Activated CD8-positive, alpha-beta T cell treated with anti-CD3 and anti-CD28 coated beads, Interleukin-2, amount 10 ng/mL, durations not matched to agents 7 days and 5 days (primary cell): ENCODE measurements at regions of chr10 and their contacts with region 1.

Region 1: GRCh38 chr10:95246579-95247051 is 44.2 kb downstream of the PDLIM1 start:
- DNase-seq: peak; percentile 81
- ATAC-seq: peak; percentile 84
- H3K4me3 Mint-ChIP-seq: no peak overlapping the region
- H3K27ac Mint-ChIP-seq: no peak overlapping the region
- H3K4me1 Mint-ChIP-seq: peaks cover 17% of the 10 kb centered on the region
- H3K27me3 Mint-ChIP-seq: no peaks in the 10 kb centered on the region

Region 2: DNA sequence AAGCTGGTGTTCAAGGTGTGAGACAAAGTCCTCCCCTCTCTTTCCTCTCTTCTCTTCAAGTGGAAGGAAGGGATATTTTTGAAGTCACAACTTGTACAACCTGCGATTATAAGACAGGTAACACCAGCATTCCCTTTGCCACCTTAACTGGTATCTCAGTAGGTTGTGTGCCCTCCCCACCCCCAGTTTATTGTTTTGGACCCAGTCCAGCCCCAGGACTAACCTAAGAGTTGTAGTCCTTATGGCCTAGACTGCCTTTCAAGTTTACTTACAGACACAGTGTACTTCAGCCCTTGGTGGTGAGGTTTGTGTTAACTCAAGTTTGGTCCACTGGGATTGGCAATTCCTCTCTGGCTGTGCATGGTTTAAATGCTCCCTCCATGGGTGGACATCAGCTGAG is 150.5 kb before region 1 on chr10:
- CTCF ChIA-PET with region 1: no interaction called
- POLR2A ChIA-PET with region 1: no interaction called
- DNase-seq: no peak
- ATAC-seq: no peak
- H3K4me3 Mint-ChIP-seq: no peak overlapping the region
- H3K27ac Mint-ChIP-seq: no peak overlapping the region
- H3K4me1 Mint-ChIP-seq: no peaks in the 10 kb centered on the region
- H3K27me3 Mint-ChIP-seq: no peaks in the 10 kb centered on the region

Region 3: DNA sequence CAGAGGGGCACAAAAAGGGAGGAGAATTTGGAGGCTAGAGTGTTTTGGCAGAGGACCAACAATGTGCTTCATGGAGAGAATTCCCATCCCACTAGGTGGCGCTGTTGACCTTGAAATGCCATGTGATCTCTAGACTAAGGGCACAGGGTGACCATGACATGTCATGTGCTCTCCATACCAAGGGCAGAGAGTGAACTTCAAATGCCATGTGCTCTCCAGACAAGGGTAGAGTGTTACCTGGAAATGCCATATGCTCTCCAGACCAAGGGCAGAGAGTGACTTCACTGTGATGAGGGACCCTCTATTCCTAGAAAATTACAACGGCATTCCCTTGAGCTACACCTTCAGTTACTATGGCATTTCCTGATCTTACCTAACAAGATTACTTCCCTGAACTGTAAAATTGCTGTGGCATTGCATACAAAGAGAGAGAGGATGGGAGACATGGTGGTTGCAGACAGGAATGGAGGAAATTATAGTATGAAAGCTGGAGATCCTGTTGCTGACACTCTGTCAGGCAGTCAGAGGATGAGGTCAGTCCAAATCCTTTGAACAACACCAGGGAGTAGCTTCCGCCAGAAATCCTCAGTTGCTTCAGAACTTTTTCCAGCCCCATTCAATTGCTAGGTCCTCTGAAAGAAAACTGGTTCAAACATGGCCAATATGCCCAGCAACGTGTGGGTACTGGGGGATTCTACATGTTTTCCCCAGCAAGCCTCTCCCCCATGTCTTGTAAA is 113.4 kb before region 1 on chr10:
- CTCF ChIA-PET with region 1: interaction called, 26 read pairs
- POLR2A ChIA-PET with region 1: no interaction called
- DNase-seq: peak; percentile 84
- ATAC-seq: peak; percentile 76
- H3K4me3 Mint-ChIP-seq: no peak overlapping the region
- H3K27ac Mint-ChIP-seq: no peak overlapping the region
- H3K4me1 Mint-ChIP-seq: no peaks in the 10 kb centered on the region
- H3K27me3 Mint-ChIP-seq: no peaks in the 10 kb centered on the region

Region 4: DNA sequence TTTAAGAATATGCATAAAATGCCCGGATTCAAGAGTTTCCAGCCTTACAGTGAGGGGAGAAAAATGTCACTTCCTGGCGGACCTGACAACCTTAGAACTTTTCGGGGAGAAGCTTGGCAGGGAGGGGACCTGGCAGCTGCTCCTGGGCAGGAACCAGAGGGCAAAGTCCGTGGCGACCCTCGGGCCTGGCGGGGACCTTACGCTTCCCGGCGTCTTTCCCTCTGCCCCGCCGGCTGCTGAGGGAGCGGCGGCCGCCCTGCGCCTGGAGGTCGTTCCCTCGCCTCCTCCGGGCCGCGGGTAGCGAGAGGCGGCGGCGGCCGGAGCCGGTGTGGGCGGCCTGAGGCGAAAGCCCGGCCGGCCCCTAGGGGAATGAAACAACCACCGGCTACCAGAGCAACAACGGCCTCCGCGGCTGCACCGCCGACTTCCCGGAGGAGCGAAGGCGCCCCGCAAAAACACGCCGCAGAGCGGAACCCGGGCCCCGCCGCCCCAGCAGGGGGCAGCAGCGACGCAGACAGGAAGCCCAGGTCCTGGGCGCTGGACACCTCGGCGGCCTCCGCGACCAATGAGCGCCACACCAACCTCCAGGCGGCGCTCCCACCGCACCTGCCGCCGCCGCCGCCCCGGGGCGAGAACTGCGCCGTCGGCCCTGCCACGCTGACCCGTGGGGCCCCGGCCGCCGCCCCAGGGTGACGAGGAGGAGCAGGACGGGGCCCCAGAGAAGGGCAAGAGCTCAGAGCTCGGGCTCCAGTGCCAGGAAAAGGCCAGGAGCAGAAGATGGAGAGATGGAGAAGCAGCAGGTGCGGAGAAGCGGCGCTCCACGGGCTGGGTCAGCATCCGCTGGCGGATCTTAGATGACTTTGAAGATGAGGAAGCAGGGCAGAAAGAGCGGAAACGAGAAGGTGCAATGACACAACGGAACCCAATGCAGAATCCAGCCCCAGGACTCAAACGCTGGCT is 63.1 kb before region 1 on chr10:
- CTCF ChIA-PET with region 1: interaction called, 18 read pairs
- POLR2A ChIA-PET with region 1: no interaction called
- DNase-seq: peak; percentile 77
- ATAC-seq: peak; percentile 98
- H3K4me3 Mint-ChIP-seq: peak overlapping the region; percentile 61
- H3K27ac Mint-ChIP-seq: peak overlapping the region; percentile 22
- H3K4me1 Mint-ChIP-seq: peaks cover 7% of the 10 kb centered on the region
- H3K27me3 Mint-ChIP-seq: peaks cover 22% of the 10 kb centered on the region

Region 5: DNA sequence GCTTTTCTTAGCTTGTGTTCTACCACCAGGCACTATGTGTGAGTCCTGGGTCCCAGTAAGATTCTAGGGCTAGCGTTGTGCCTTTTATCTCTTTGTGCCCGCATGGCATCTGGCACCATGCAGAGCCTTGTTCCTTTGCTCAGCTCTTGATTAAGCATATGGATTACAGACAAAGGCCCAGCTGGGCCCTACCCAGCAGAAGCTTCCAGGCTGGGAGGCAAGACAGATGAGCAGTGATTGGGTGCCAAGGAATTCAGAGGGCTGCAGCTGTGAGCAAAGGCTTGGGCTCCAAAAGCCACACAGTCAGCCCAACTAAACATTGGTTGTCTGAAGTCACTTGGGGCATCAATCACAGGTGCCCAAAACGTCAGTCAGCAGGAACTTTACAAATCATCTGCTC is 50.6 kb before region 1 on chr10:
- CTCF ChIA-PET with region 1: no interaction called
- POLR2A ChIA-PET with region 1: no interaction called
- DNase-seq: no peak
- ATAC-seq: no peak
- H3K4me3 Mint-ChIP-seq: no peak overlapping the region
- H3K27ac Mint-ChIP-seq: no peak overlapping the region
- H3K4me1 Mint-ChIP-seq: no peaks in the 10 kb centered on the region
- H3K27me3 Mint-ChIP-seq: peaks cover 6% of the 10 kb centered on the region

Region 6: GRCh38 chr10:95236068-95236903 is 10.3 kb before region 1 on chr10:
- CTCF ChIA-PET with region 1: interaction called, 18 read pairs
- POLR2A ChIA-PET with region 1: no interaction called
- DNase-seq: no peak
- ATAC-seq: peak; percentile 62
- H3K4me3 Mint-ChIP-seq: no peak overlapping the region
- H3K27ac Mint-ChIP-seq: peak overlapping the region; percentile 51
- H3K4me1 Mint-ChIP-seq: peaks cover 23% of the 10 kb centered on the region
- H3K27me3 Mint-ChIP-seq: no peaks in the 10 kb centered on the region

Region 7: GRCh38 chr10:95257849-95258248 is 11.2 kb after region 1 on chr10:
- CTCF ChIA-PET with region 1: interaction called, 12 read pairs
- POLR2A ChIA-PET with region 1: no interaction called
- DNase-seq: no peak
- ATAC-seq: no peak
- H3K4me3 Mint-ChIP-seq: no peak overlapping the region
- H3K27ac Mint-ChIP-seq: no peak overlapping the region
- H3K4me1 Mint-ChIP-seq: no peaks in the 10 kb centered on the region
- H3K27me3 Mint-ChIP-seq: peaks cover 23% of the 10 kb centered on the region